ENCODE measurements at regions of chrX and their contacts with region 1.

Region 1: DNA sequence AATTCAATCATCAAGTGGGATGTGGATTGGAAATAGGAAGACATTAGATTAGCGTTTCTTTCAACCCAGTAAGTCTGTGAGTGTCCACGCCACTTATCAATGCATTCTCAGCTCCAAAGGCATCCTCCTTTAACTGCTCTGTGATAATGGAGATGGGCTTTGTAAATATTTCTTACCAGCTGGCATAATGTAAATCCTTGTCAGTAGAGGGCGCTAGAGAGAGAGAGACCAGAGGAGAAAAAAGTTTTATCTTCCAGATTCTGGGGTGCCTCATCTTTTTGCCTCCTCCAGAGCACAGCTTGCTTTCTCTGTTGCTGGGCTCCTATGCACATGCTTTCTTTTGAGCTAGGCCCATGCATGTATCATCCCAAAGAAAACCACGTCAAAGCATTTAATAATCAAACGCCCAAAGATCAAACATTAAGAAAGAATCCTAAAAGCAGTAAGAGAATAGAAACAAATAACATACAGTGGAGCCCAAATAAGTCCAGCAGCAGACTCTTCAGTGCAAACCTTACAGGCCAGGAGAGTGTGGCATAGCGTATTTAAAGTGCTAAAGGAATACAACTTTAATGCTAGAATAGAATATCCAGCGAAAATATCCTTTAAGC is 9.6 kb upstream of the MTMR1 start:
- DNase-seq: peak; percentile 43
- H3K4me3 ChIP-seq: no peak overlapping the region
- H3K27ac ChIP-seq: no peak overlapping the region
- H3K4me1 ChIP-seq: no peaks in the 10 kb centered on the region
- H3K27me3 ChIP-seq: no peaks in the 10 kb centered on the region
- CTCF ChIP-seq: peak; percentile 67
- EP300 ChIP-seq: no peak
- RAD21 ChIP-seq: peak; percentile 48

Region 2: DNA sequence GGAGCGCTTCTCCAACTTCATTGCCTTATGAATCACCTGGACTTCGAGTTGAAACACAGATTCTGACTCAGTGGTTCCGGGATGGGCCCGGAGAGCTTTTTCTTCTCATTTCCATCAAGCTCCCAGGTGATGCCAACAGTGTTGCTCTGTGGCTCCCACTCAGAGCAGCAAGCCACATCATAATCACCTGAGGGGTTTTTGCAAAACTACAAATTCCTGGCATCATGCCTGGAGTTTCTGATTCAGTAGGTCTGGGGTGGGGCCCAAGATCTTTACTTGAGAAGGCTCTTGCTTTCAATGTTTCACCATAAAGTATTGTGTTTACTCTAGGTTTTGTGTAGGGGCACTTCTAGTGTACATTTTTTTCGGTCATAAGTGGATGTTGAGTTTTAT is 108.2 kb before region 1 on chrX:
- CTCF ChIA-PET with region 1: no interaction called
- POLR2A ChIA-PET with region 1: no interaction called
- DNase-seq: no peak
- H3K4me3 ChIP-seq: no peak overlapping the region
- H3K27ac ChIP-seq: no peak overlapping the region
- H3K4me1 ChIP-seq: no peaks in the 10 kb centered on the region; a peak in 1 of 4 replicates
- H3K27me3 ChIP-seq: no peaks in the 10 kb centered on the region
- CTCF ChIP-seq: no peak
- EP300 ChIP-seq: no peak
- RAD21 ChIP-seq: no peak

Region 3: GRCh38 chrX:150693775-150694574 is 10.3 kb after region 1 on chrX:
- CTCF ChIA-PET with region 1: interaction called, 16 read pairs
- POLR2A ChIA-PET with region 1: no interaction called
- DNase-seq: peak; percentile 82
- H3K4me3 ChIP-seq: peak overlapping the region; percentile 60 to 62
- H3K27ac ChIP-seq: peak overlapping the region; percentile 55 to 61; a peak in 3 of 4 replicates
- H3K4me1 ChIP-seq: peaks cover 4 to 13% of the 10 kb centered on the region in 2 experiments; a peak in 1 of 4 replicates
- H3K27me3 ChIP-seq: no peaks in the 10 kb centered on the region
- CTCF ChIP-seq: no peak
- EP300 ChIP-seq: no peak
- RAD21 ChIP-seq: no peak

Region 4: DNA sequence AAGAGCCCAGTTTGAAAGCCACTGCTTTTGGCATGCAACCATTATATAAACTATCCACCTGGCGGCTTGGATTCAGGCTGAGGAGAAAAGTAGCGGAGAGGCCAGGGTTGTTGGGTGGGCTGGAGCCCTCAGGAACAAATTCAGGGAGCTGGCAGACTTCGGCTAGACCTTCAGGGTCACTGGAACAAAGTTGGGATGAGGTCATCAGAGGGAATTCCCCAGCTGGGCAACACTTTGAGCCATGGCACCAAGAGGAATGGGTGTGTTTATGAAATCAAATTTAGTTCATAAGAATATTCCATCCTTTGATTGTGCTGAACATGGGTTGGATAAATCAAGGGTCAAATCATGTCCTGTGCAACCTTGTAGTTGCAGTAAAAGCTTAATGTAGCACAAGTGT is 31.5 kb after region 1 on chrX:
- CTCF ChIA-PET with region 1: interaction called, 14 read pairs
- POLR2A ChIA-PET with region 1: no interaction called
- DNase-seq: no peak
- H3K4me3 ChIP-seq: no peak overlapping the region
- H3K27ac ChIP-seq: no peak overlapping the region
- H3K4me1 ChIP-seq: peaks cover 0 to 5% of the 10 kb centered on the region in 2 experiments; a peak in 2 of 4 replicates
- H3K27me3 ChIP-seq: no peaks in the 10 kb centered on the region
- CTCF ChIP-seq: no peak
- EP300 ChIP-seq: no peak
- RAD21 ChIP-seq: no peak

Measured in SK-N-SH (cell line).